ENCODE measurements at regions of chr13 and their contacts with region 1.

Region 1: DNA sequence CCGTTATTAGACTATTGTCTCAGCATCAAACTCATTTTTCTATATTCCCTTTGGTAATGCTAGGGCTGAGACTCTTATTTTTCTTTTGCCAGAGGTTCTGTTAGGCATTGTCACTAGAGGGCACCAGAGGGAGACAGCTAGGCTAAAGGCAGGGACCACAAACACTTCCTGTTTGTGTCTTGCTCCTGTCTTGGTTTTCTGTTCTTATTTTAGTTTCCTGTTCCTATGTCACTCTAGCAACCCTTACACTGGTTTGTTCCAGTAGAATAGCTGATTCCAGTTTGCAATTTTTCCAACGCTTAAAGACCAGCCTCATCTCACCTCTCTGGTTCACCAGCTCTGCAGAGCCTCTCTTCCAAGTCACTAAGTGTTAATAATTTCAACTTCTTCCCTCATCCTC is 772.0 kb downstream of the DIAPH3 start:
- DNase-seq: peak in 2 of 10 donors; percentile 26 to 66

Region 2: DNA sequence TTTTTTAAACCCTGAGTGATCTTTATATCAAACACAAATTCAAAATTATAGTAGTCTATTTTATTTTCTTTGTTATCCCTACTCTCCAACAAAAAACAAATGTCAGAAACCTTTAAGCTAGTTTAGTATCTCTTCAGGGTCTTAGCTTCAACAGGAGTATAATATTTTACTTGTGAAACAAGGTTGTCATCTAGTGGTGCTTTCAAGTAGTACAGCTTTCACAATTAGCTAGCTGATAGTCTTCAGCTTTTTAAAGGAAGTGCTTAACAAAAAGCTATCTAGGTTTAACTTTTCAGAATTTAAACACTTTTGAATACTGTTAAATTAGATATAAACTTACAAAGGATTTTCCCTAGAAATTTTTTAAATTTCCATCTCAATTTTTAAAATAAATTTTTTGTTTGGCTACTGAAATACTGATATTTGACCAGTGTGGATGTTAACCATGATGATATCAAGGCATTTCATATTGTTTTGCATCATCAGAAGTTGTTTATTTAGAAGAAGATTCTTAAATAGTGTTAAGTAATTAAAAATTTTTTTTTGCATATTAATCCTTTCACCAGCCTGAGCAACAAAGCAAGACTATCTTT is 1039.5 kb after region 1 on chr13:
- intact Hi-C with region 1: loop called (anchors 5 kb)
- DNase-seq: no peak

Measured in posterior cingulate gyrus (tissue), 11 donors.